Activated naive CD4-positive, alpha-beta T cell treated with anti-CD3 and anti-CD28 coated beads for 36 hours (primary cell): ENCODE measurements at regions of chr1 and their contacts with region 1.

Region 1: GRCh38 chr1:66764994-66765578 is 12.8 kb downstream of the DYNLT5 start:
- DNase-seq: peak; percentile 80
- H3K4me3 Mint-ChIP-seq: no peak overlapping the region
- H3K27ac Mint-ChIP-seq: no peak overlapping the region
- H3K4me1 Mint-ChIP-seq: peaks cover 22% of the 10 kb centered on the region
- H3K27me3 Mint-ChIP-seq: no peaks in the 10 kb centered on the region

Region 2: GRCh38 chr1:66648901-66649595 is 116.0 kb before region 1 on chr1:
- CTCF ChIA-PET with region 1: no interaction called
- intact Hi-C with region 1: no loop called
- DNase-seq: no peak
- H3K4me3 Mint-ChIP-seq: no peak overlapping the region
- H3K27ac Mint-ChIP-seq: no peak overlapping the region
- H3K4me1 Mint-ChIP-seq: no peaks in the 10 kb centered on the region
- H3K27me3 Mint-ChIP-seq: no peaks in the 10 kb centered on the region

Region 3: GRCh38 chr1:66733348-66734036 is 31.6 kb before region 1 on chr1:
- CTCF ChIA-PET with region 1: no interaction called
- intact Hi-C with region 1: no loop called
- DNase-seq: no peak
- H3K4me3 Mint-ChIP-seq: no peak overlapping the region
- H3K27ac Mint-ChIP-seq: no peak overlapping the region
- H3K4me1 Mint-ChIP-seq: peaks cover 23% of the 10 kb centered on the region
- H3K27me3 Mint-ChIP-seq: no peaks in the 10 kb centered on the region

Region 4: DNA sequence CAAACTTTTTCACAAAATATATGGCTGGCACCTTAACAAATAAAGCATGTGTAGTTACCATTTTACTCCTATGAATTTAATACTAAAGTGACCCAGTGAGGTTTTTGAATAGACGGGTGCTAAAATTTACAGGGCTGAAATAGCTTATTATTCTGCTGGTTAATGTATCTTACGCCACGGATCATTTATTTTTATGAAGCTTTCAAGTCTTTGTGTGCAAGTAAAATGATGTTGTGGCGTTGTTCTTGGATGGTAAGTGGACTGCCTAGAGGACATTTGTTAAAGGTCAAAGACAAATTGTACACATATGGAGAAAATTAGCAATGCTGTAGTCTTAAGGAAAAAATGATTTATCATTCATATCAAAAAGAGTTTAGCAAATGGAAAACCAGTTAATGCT is 13.2 kb after region 1 on chr1:
- CTCF ChIA-PET with region 1: no interaction called
- intact Hi-C with region 1: no loop called
- DNase-seq: no peak
- H3K4me3 Mint-ChIP-seq: no peak overlapping the region
- H3K27ac Mint-ChIP-seq: no peak overlapping the region
- H3K4me1 Mint-ChIP-seq: peaks cover 4% of the 10 kb centered on the region
- H3K27me3 Mint-ChIP-seq: no peaks in the 10 kb centered on the region

Region 5: GRCh38 chr1:66788231-66788939 is 23.3 kb after region 1 on chr1:
- CTCF ChIA-PET with region 1: no interaction called
- intact Hi-C with region 1: loop called (anchors 1 kb)
- DNase-seq: peak; percentile 81
- H3K4me3 Mint-ChIP-seq: peak overlapping the region; percentile 51
- H3K27ac Mint-ChIP-seq: peak overlapping the region; percentile 50
- H3K4me1 Mint-ChIP-seq: peaks cover 30% of the 10 kb centered on the region
- H3K27me3 Mint-ChIP-seq: no peaks in the 10 kb centered on the region

Region 6: GRCh38 chr1:66840929-66841328 is 75.8 kb after region 1 on chr1:
- CTCF ChIA-PET with region 1: no interaction called
- intact Hi-C with region 1: loop called (anchors 5 kb)
- DNase-seq: no peak
- H3K4me3 Mint-ChIP-seq: no peak overlapping the region
- H3K27ac Mint-ChIP-seq: peak overlapping the region; percentile 63
- H3K4me1 Mint-ChIP-seq: peaks cover 14% of the 10 kb centered on the region
- H3K27me3 Mint-ChIP-seq: no peaks in the 10 kb centered on the region

Region 7: DNA sequence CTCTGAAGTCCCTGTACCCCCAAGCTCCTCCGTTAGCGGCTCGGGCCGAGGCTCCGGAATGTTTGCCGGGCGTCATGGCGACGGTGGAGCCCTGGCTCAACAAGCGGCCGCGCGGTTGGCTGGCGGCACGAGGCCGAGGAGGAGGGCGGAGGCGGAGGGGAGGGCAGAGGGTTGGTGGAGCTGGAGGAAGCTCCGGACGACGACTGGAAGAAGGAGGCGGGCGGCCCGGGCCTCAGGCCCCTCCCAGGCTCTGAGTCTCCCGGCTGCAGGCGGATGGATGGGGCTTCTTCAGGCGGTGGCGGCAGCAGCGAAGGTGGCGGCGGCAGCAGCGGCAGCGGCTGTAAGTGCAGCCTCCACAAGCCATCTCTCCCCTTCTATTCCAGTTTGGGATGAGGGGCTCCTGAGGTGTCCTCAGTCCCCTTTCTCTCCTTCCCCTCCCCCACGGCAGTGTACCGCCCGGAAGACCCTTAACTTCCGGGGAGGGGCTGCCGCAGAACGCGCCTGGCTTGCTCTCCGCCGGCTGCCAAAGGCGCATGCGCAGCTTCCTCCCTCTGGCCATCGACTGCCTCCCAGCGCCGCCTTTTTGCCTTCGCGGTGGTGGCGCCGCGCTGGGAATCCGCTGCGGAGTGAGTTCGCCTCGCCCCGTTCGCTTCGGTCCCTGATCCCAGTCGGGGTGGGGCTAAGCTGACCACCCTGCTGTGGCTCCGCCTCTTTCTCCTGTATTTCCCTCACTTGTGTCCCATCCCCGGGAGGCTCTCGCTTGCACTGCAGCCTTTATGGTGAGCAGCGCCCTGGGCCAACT is 159.9 kb after region 1 on chr1 and contains the starts of genes DNAI4 and MIER1:
- CTCF ChIA-PET with region 1: interaction called, 4 read pairs
- intact Hi-C with region 1: loop called (anchors 1 kb)
- DNase-seq: peak; percentile 98
- H3K4me3 Mint-ChIP-seq: peak within 1 kb of the TSS; percentile 92
- H3K27ac Mint-ChIP-seq: peak within 1 kb of the TSS; percentile 95
- H3K4me1 Mint-ChIP-seq: peaks cover 50% of the 10 kb centered on the region
- H3K27me3 Mint-ChIP-seq: no peaks in the 10 kb centered on the region
- total RNA-seq, gene DNAI4: 0.83 to 1.5 TPM
- total RNA-seq, gene MIER1: 56.5 to 58.3 TPM

Region 8: GRCh38 chr1:66996018-66996682 is 231.1 kb after region 1 on chr1:
- CTCF ChIA-PET with region 1: interaction called, 10 read pairs
- intact Hi-C with region 1: loop called (anchors 1 kb)
- DNase-seq: peak; percentile 89
- H3K4me3 Mint-ChIP-seq: no peak overlapping the region
- H3K27ac Mint-ChIP-seq: no peak overlapping the region
- H3K4me1 Mint-ChIP-seq: peaks cover 26% of the 10 kb centered on the region
- H3K27me3 Mint-ChIP-seq: no peaks in the 10 kb centered on the region

Region 9: DNA sequence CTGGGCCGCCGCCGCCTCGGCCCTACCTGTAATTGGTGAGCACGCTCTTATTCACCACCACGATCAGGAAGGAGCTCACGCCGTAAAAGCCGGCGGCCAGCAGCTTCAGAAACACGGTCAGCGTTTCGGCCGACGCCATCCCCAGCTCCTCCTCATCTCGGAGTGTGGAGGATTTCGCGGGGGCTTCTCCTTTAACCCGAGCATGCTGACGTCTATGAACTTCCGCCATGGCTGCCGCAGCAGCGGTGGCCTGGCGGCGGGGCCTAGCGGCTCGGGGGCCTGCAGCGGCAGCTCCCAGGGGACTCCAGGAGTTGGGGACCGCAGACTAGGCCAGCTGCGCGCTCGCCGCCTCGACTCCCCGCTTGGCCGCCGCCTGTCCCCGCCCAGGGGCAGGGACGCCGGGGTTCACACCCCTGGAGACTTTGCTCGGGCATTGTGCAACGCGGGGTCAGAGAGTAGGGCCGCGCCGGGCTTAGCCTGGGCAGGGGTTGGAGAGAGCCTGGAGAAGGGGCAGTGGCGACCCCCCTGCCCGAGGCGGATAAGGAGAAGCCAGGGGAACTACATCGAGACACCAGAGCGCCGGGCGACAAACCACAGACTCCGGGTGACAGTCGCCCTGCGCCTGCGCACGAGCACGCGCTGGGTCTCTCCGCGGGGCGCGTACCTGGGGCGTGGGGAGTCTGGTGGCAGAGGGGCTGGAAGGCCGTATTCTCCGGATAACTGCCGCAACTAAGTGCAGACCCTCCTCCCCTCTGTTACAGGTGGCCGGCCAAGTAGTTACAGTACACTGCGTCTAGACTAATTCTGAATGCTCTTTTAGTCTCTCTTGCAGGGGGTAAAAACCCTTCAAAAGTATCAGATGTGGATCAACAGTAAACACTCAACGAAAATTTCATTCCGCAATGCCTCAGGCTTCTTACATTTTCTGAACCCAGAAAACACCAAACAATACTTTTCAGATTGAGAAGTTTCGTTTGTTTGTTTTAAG is 289.0 kb after region 1 on chr1 and contains the start of gene SLC35D1:
- CTCF ChIA-PET with region 1: interaction called, 4 read pairs
- intact Hi-C with region 1: loop called (anchors 2 kb)
- DNase-seq: peak; percentile 81
- H3K4me3 Mint-ChIP-seq: peak within 1 kb of the TSS; percentile 82
- H3K27ac Mint-ChIP-seq: peak within 1 kb of the TSS; percentile 93
- H3K4me1 Mint-ChIP-seq: peaks cover 19% of the 10 kb centered on the region
- H3K27me3 Mint-ChIP-seq: no peaks in the 10 kb centered on the region
- total RNA-seq, gene SLC35D1: 10.5 to 11.1 TPM

Region 10: DNA sequence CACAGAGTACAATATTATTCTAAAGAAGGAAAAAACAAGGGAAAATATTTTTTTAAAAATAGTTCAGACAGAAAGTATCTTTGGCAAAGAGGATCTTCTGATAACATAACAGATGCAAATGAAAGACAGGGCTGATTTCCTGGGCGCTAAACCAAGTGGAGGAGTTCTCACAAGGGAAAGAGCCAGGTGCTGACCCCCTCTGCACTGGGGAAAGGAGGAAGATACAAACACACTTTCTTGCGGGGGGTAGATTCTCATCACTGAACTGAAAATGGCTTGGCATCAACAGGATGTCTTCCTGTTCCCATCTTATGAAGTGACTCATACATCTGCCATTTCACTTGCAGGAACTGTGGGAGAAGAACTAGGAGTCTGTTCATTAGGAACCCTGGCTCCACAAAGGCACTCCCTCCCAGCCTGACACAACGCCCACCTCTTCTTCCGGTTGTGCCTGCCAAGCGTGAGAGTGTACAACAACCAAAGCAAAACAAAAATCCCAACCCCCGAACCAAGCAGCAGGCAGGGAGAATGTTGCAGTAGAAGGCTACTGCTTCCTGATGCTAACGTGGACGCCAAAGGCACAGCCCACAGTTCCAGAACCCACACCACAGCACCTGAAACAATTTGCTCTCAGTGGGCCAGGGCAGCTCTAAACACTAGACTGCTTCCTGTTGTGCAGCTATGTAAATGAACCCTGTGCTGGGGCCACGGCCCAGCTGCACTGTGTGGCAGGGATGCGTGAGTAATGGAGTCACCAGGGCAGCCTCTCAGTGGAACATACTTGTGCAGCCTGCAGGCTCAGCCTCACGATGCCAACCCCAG is 970.9 kb after region 1 on chr1:
- CTCF ChIA-PET with region 1: no interaction called
- intact Hi-C with region 1: loop called (anchors 10 kb)
- DNase-seq: peak; percentile 73
- H3K4me3 Mint-ChIP-seq: peak overlapping the region; percentile 53
- H3K27ac Mint-ChIP-seq: peak overlapping the region; percentile 74
- H3K4me1 Mint-ChIP-seq: peaks cover 16% of the 10 kb centered on the region
- H3K27me3 Mint-ChIP-seq: peaks cover 4% of the 10 kb centered on the region